Activated CD4-positive, alpha-beta T cell treated with anti-CD3 and anti-CD28 coated beads for 36 hours (primary cell): ENCODE measurements at regions of chr19 and their contacts with region 1.

Region 1: GRCh38 chr19:51338563-51339312 is 3.2 kb downstream of the VSIG10L start:
- DNase-seq: peak; percentile 96
- ATAC-seq: peak; percentile 73
- H3K4me3 Mint-ChIP-seq: peak overlapping the region; percentile 76
- H3K27ac Mint-ChIP-seq: peak overlapping the region; percentile 91
- H3K4me1 Mint-ChIP-seq: peaks cover 11% of the 10 kb centered on the region
- H3K27me3 Mint-ChIP-seq: no peaks in the 10 kb centered on the region

Region 2: GRCh38 chr19:50804420-50805272 is 534.1 kb before region 1 on chr19:
- CTCF ChIA-PET with region 1: no interaction called
- POLR2A ChIA-PET with region 1: interaction called, 3 read pairs
- intact Hi-C with region 1: loop called in 1 of 2 experiments (anchors 1 kb)
- DNase-seq: peak; percentile 99
- ATAC-seq: peak; percentile 99
- H3K4me3 Mint-ChIP-seq: peak overlapping the region; percentile 96
- H3K27ac Mint-ChIP-seq: peak overlapping the region; percentile 98
- H3K4me1 Mint-ChIP-seq: peaks cover 35% of the 10 kb centered on the region
- H3K27me3 Mint-ChIP-seq: no peaks in the 10 kb centered on the region

Region 3: DNA sequence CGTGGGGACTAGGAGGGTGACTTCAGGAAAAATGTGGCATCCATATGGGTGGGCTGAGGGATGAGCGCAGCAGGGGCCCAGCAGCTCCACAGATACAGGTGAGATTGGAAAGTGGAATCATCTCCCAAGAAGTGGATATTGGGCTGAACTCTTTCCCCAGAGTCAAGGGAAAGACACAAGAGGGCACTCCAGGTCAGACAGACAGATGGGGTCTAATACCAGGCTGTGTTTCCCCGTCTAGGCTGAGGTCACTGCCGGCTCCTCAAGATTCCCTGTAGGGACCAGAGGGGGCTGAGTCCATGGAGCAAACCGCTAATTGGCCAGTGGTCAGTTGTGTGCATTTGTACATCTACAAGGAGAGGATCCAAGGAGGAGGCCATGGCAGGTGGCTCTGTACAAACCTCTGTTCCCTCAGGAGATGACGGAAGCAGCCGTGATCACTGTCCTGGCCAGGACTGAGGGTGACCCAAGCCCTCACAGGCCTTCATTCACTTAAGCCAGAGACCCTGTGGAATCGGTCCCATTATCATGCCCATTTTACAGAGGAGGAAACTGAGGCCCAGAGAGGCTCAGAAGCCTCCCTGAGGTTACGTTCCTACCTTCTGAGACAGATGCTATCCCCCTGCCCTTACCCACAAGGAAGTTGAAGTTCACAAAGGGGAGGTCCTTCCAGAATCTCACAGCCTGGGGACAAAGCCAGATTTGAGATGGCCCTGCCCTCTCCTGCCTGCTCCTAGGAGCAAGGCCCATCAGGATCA is 42.2 kb before region 1 on chr19:
- CTCF ChIA-PET with region 1: no interaction called
- POLR2A ChIA-PET with region 1: no interaction called
- intact Hi-C with region 1: no loop called
- DNase-seq: no peak
- ATAC-seq: no peak
- H3K4me3 Mint-ChIP-seq: no peak overlapping the region
- H3K27ac Mint-ChIP-seq: no peak overlapping the region
- H3K4me1 Mint-ChIP-seq: no peaks in the 10 kb centered on the region
- H3K27me3 Mint-ChIP-seq: no peaks in the 10 kb centered on the region

Region 4: DNA sequence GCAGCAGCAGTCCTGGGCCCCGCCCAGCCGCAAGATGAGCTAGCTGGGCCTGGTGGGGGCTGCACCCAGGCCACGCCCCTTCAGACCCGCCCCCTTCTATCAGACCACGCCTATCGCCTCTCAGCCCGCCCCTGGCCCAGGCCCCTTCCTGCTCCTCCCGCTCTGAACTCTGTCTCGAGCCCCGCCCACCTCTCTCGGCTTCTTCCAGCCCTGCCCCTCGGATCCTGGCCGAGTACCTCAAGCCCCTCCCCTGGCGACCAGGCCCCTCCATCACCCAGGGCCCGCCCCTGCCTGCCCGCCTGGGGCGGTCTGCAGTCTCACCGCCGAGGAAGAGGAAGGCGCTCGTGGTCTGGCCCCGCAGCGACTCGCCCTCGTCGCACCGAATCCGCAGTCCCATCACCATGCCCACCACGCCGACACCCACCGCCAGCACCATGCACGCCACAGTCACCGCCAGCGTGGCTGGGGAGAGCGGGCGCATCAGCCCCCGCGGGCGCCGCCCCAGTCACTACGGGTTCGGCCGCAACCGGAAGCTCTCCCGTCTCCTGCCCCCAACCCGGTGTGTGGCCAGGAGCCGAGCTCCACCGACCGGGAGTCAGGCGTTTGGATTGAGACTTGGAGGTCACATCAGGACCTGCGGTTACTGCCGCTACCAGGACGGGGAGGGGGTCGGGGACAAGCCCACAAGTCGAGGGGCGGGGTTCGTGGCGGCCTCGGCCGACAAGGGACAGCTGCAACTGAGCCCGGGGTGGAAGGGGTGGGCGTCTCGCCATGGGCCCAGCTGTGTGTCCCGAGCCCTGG is 29.0 kb after region 1 on chr19:
- CTCF ChIA-PET with region 1: interaction called, 11 read pairs
- POLR2A ChIA-PET with region 1: interaction called, 7 read pairs
- intact Hi-C with region 1: loop called (anchors 1 kb)
- DNase-seq: peak; percentile 99
- ATAC-seq: peak; percentile 83
- H3K4me3 Mint-ChIP-seq: peak overlapping the region; percentile 90
- H3K27ac Mint-ChIP-seq: peak overlapping the region; percentile 97
- H3K4me1 Mint-ChIP-seq: peaks cover 58% of the 10 kb centered on the region
- H3K27me3 Mint-ChIP-seq: no peaks in the 10 kb centered on the region

Region 5: GRCh38 chr19:51422053-51422448 is 83.3 kb after region 1 on chr19:
- CTCF ChIA-PET with region 1: interaction called, 4 read pairs
- POLR2A ChIA-PET with region 1: interaction called, 4 read pairs
- intact Hi-C with region 1: loop called in 1 of 2 experiments (anchors 1 kb)
- DNase-seq: peak; percentile 94
- ATAC-seq: peak; percentile 60
- H3K4me3 Mint-ChIP-seq: no peak overlapping the region
- H3K27ac Mint-ChIP-seq: no peak overlapping the region
- H3K4me1 Mint-ChIP-seq: peaks cover 24% of the 10 kb centered on the region
- H3K27me3 Mint-ChIP-seq: peaks cover 20% of the 10 kb centered on the region

Region 6: GRCh38 chr19:51570962-51571575 is 232.3 kb after region 1 on chr19 and contains the start of gene ZNF175:
- CTCF ChIA-PET with region 1: no interaction called
- POLR2A ChIA-PET with region 1: no interaction called
- intact Hi-C with region 1: loop called in 1 of 2 experiments (anchors 2 kb)
- DNase-seq: peak; percentile 91
- ATAC-seq: peak; percentile 96
- H3K4me3 Mint-ChIP-seq: peak within 1 kb of the TSS; percentile 91
- H3K27ac Mint-ChIP-seq: peak within 1 kb of the TSS; percentile 89
- H3K4me1 Mint-ChIP-seq: peaks cover 31% of the 10 kb centered on the region
- H3K27me3 Mint-ChIP-seq: peaks cover 2% of the 10 kb centered on the region
- total RNA-seq, gene ZNF175: 5.9 to 9.6 TPM

Region 7: GRCh38 chr19:51688672-51689571 is 350.2 kb after region 1 on chr19:
- CTCF ChIA-PET with region 1: no interaction called
- POLR2A ChIA-PET with region 1: no interaction called
- intact Hi-C with region 1: loop called in 1 of 2 experiments (anchors 1 kb)
- DNase-seq: peak; percentile 50
- ATAC-seq: no peak
- H3K4me3 Mint-ChIP-seq: peak overlapping the region; percentile 90
- H3K27ac Mint-ChIP-seq: peak overlapping the region; percentile 49
- H3K4me1 Mint-ChIP-seq: peaks cover 15% of the 10 kb centered on the region
- H3K27me3 Mint-ChIP-seq: no peaks in the 10 kb centered on the region

Region 8: DNA sequence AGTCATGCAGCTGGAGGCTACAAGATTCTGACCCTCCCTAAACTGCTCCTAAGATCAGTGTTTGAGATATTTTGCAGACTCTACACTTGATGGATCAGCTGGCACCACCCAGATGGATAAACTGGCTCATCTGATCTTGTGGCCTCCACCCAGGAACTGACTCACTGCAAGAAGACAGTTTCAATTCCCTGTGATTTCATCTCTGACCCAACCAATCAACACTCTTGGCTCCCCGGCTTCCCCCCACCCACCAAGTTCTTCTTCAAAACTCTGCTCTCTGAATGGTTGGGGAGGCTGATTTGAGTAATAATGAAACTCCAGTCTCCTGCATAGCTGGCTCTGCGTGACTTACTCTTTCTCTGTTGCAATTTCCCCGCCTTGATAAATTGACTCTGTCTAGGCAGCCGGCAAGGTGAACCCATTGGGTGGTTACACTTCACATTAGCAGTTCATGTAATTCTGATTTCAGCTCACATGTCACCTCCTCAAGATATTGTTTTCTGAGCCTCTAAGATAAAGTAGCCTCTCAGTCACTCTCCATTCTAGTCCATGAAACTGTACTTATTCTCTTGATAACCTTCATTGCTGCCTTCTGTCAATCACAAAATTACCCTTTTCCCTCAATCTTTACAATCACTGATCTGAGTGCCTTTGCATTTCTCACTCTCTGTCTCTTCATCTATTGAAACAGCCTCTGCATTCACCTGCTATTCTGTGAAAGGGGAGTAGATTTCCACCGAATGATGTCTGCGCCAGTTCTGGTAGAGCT is 446.4 kb after region 1 on chr19:
- CTCF ChIA-PET with region 1: no interaction called
- POLR2A ChIA-PET with region 1: no interaction called
- intact Hi-C with region 1: loop called in 1 of 2 experiments (anchors 1 kb)
- DNase-seq: peak; percentile 87
- ATAC-seq: peak; percentile 97
- H3K4me3 Mint-ChIP-seq: no peak overlapping the region
- H3K27ac Mint-ChIP-seq: no peak overlapping the region
- H3K4me1 Mint-ChIP-seq: peaks cover 4% of the 10 kb centered on the region
- H3K27me3 Mint-ChIP-seq: peaks cover 16% of the 10 kb centered on the region